ENCODE measurements at regions of chr15 and their contacts with region 1.

Region 1: DNA sequence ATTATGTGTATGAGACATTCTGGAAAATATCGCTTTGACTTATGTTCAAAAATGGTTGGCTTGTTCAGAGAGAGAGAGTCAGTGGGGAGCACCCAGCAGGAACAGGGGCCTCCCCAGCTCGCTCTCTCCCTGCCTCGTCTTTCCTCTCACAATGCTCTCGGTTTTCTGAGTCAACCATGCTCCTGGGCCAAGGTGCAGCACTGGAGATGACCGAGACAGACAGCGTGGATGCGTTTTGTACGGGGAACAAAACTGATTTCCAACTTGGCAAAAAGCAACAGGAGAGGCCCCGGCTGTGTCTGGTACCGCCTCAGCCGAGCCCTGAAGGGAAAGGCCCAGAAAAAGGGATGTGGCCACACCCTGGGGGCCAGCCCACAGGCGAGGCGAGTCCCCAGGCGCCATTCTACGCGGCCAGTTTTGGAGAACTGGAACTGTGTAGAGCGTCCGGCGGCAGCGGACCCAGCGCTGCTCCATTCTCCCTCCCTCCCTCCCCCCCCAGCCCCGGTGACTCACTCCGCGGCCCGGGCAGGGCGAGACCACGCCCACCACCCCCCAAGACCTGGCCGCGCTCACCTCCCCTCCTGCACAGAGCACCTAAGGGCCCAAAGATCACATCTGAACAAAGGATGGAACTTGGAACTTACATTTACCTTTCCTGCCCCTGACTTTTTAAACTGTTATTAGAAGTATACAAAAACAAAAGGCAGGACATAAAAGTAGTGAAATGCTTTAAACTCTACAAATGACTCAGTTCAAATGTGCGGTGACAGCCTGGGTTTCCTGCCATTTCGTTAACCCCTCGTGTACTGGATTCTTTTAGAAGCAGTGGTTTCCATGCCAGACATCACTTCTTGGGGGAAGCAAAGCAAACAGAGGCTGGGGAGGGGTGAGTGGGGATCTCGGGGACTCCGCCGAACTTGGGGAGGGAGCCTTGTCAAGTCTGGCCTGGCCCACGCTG is 12.7 kb downstream of the ATP10A start:
- DNase-seq: peak; percentile 70
- ATAC-seq: peak; percentile 90
- H3K4me3 ChIP-seq: peak overlapping the region; percentile 53
- H3K27ac ChIP-seq: peak overlapping the region; percentile 94
- H3K4me1 ChIP-seq: peaks cover 21% of the 10 kb centered on the region
- H3K27me3 ChIP-seq: no peaks in the 10 kb centered on the region
- CTCF ChIP-seq: no peak
- POLR2A ChIP-seq: peak; percentile 84
- RAD21 ChIP-seq: no peak

Region 2: DNA sequence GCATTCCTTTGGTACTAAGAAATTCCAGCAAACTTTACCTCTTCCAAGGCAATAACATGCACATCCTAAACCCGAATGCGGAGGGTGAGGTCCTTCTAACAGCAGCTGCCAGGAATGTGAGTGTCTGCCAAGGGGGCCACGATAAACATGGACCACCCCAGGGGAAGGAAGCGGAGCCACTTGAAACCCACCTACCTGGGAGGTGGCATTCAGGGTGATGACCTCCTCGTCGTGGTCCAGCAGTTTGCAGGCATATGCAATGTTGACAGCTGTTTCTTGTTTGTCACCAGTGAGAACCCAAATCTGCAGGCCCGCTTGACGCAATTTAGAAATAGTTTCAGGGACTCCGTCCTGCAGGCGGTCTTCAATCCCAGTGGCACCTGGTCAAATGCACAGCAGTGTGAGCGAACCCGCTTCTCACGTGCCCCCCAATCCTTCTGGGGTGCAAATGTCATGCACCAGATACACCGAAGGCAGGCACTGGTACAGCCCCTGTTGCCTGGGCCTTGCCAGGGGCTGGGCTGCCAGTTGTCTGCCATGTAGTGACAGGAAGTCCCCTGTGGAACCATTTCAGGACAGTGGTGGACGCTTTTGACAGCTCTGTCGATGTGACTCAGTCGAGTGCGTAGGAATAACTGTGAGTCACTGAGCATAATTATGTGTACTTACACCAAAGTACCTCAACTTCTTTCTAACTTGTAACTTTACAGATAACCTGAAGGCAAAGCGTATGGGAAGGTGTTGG is 148.5 kb before region 1 on chr15:
- CTCF ChIA-PET with region 1: no interaction called
- POLR2A ChIA-PET with region 1: no interaction called
- dilution Hi-C with region 1: no loop called
- in situ Hi-C with region 1: no loop called
- intact Hi-C with region 1: no loop called
- DNase-seq: peak; percentile 15
- ATAC-seq: no peak
- H3K4me3 ChIP-seq: no peak overlapping the region
- H3K27ac ChIP-seq: no peak overlapping the region
- H3K4me1 ChIP-seq: no peaks in the 10 kb centered on the region
- H3K27me3 ChIP-seq: no peaks in the 10 kb centered on the region
- CTCF ChIP-seq: no peak
- POLR2A ChIP-seq: no peak
- RAD21 ChIP-seq: no peak

Region 3: GRCh38 chr15:25739687-25740121 is 110.7 kb before region 1 on chr15:
- CTCF ChIA-PET with region 1: no interaction called
- POLR2A ChIA-PET with region 1: no interaction called
- dilution Hi-C with region 1: no loop called
- in situ Hi-C with region 1: no loop called
- intact Hi-C with region 1: loop called (anchors 5 kb)
- DNase-seq: peak; percentile 64
- ATAC-seq: peak; percentile 72
- H3K4me3 ChIP-seq: no peak overlapping the region
- H3K27ac ChIP-seq: no peak overlapping the region
- H3K4me1 ChIP-seq: peaks cover 13% of the 10 kb centered on the region
- H3K27me3 ChIP-seq: no peaks in the 10 kb centered on the region
- CTCF ChIP-seq: peak; percentile 63
- POLR2A ChIP-seq: no peak
- RAD21 ChIP-seq: peak; percentile 70

Region 4: GRCh38 chr15:25790000-25790660 is 60.3 kb before region 1 on chr15:
- CTCF ChIA-PET with region 1: no interaction called
- POLR2A ChIA-PET with region 1: no interaction called
- dilution Hi-C with region 1: no loop called
- in situ Hi-C with region 1: no loop called
- intact Hi-C with region 1: loop called (anchors 2 kb)
- DNase-seq: peak; percentile 90
- ATAC-seq: peak; percentile 60
- H3K4me3 ChIP-seq: peak overlapping the region; percentile 4; the same call in 1 of the 2 replicates
- H3K27ac ChIP-seq: peak overlapping the region; percentile 17
- H3K4me1 ChIP-seq: peaks cover 28% of the 10 kb centered on the region
- H3K27me3 ChIP-seq: no peaks in the 10 kb centered on the region
- CTCF ChIP-seq: no peak
- POLR2A ChIP-seq: no peak; the same call in none of the 2 replicates
- RAD21 ChIP-seq: no peak; the same call in 1 of the 2 replicates

Region 5: DNA sequence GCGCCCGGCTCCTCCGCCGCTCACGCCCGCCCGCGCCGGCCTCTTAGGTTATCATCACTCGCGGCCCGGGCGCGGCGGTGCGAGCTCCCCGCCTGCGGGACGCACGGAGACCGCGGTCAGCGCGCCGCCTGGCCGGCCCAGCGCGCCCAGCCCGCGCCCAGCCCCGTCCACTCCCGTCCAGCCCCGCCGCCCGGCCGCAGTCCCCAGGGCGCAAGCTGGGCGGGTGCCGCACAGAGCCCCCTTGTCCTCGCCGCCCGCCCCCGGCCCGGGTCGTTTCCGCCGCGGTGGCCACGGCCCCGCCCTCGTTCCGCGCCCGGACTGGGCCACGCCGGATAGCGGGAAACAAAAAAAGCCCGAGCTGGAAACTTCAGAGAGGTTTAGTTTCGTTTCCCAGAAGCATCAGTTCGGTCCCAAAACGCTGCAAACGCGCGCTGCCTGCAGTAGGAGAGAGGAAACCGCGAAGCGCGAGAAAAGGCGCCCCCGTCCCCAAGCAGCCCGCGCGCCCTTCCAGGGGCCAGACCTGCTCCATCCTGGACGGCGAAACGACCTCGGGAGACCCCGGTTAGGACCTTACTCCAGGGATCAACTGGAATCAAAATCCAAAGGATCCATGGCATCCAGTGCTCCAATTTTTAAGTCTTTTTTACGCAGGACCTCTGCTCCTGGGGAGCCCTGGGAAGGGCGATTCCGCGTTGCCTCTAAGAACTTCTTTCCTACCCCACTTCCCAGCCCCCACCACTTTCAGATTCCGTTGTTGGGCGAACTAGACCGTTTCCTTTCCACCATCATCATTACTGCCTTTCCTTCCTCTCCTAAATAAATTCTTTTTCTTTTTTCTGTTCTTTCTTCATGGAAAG is 12.9 kb after region 1 on chr15 and contains the start of gene ATP10A:
- CTCF ChIA-PET with region 1: no interaction called
- POLR2A ChIA-PET with region 1: interaction called, 3 read pairs
- dilution Hi-C with region 1: no loop called
- in situ Hi-C with region 1: no loop called
- intact Hi-C with region 1: loop called (anchors 1 kb)
- DNase-seq: peak; percentile 71
- ATAC-seq: peak; percentile 63
- H3K4me3 ChIP-seq: peak within 1 kb of the TSS; percentile 84
- H3K27ac ChIP-seq: peak within 1 kb of the TSS; percentile 63
- H3K4me1 ChIP-seq: peaks cover 22% of the 10 kb centered on the region
- H3K27me3 ChIP-seq: no peaks in the 10 kb centered on the region
- CTCF ChIP-seq: no peak
- POLR2A ChIP-seq: no peak
- RAD21 ChIP-seq: peak; percentile 2; the same call in 1 of the 2 replicates
- total RNA-seq, gene ATP10A: 12.8 and 13.8 TPM in 2 replicates

Measured in IMR-90 (cell line).